ENCODE measurements at regions of chr18 and their contacts with region 1.

Region 1: DNA sequence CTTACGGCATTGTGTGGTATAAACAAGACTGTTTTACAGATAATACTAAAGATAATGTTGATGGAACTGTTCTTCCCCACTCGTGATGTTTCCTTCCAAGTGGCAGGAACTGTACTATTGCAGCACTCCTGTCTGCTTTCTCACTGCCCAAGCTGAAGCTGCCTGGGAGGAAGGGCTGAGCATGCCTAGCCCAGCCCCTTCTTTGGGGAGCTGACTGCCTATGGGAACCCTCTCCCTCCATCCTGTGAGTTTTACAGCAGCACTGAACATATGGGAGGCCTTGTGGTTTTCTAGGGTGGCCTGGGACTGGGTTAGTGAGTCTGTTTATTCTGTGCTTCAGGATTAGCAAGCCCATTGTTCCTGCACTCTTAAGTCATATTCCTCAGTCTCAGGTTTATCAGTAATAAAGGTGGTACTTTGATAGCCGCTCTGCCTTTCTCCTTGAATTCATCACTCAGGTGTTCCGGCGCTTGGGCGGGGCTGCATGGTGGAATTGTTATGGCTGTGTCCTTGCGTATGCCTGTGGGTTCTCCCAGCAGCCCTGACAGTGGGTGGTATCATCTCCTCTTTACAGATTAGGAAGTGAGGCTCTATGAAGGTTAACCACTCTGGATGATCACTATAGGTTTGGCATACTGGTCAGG is 379.7 kb downstream of the PTPRM start:
- DNase-seq: no peak
- ATAC-seq: peak; percentile 85
- H3K4me3 ChIP-seq: peak overlapping the region; percentile 23
- H3K27ac ChIP-seq: peak overlapping the region; percentile 15
- H3K4me1 ChIP-seq: peaks cover 12% of the 10 kb centered on the region
- H3K27me3 ChIP-seq: no peaks in the 10 kb centered on the region
- CTCF ChIP-seq: no peak

Region 2: GRCh38 chr18:7885865-7886264 is 61.0 kb before region 1 on chr18:
- intact Hi-C with region 1: loop called (anchors 10 kb)
- DNase-seq: no peak
- ATAC-seq: no peak
- H3K4me3 ChIP-seq: no peak overlapping the region
- H3K27ac ChIP-seq: no peak overlapping the region
- H3K4me1 ChIP-seq: no peaks in the 10 kb centered on the region
- H3K27me3 ChIP-seq: no peaks in the 10 kb centered on the region
- CTCF ChIP-seq: no peak

Region 3: DNA sequence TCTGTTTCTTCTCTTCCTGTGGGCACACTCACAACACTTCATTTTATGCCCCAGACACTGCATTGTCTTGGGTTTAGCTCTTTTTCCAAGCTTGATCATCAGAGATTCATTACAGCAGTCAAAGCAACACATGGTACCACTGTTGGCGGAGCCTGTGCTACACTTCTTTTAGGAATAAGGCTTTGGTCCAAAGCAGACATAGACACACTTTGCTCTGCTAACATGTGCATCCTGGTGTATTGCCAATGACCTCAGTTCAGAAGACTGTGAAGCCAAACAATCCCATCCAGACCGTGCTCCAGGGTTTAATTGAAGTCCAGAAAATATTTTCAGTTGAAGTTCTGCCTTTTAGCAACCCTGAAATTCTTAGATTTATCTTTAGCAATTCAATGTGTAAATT is 307.8 kb after region 1 on chr18:
- intact Hi-C with region 1: no loop called
- DNase-seq: no peak
- ATAC-seq: no peak
- H3K4me3 ChIP-seq: no peak overlapping the region
- H3K27ac ChIP-seq: no peak overlapping the region
- H3K4me1 ChIP-seq: no peaks in the 10 kb centered on the region
- H3K27me3 ChIP-seq: no peaks in the 10 kb centered on the region
- CTCF ChIP-seq: no peak

Measured in upper lobe of right lung (tissue), 1 donor.